Heart right ventricle (tissue), 16 donors: ENCODE measurements at regions of chr18 and their contacts with region 1.

Region 1: GRCh38 chr18:48161191-48161910 is 230.9 kb upstream of the SMAD2 start:
- DNase-seq: peak; percentile 86 to 88
- ATAC-seq: peak; percentile 94 to 97 (median 96)
- H3K4me3 ChIP-seq: peak overlapping the region; percentile 63 to 87 (median 67)
- H3K27ac ChIP-seq: peak overlapping the region; percentile 31 to 95 (median 90)
- H3K4me1 ChIP-seq: peaks cover 6 to 47% (median 27%) of the 10 kb centered on the region in 9 donors
- H3K27me3 ChIP-seq: no peaks in the 10 kb centered on the region
- CTCF ChIP-seq: no peak

Region 2: GRCh38 chr18:48022531-48023329 is 138.6 kb before region 1 on chr18:
- intact Hi-C with region 1: loop called in 1 of 10 experiments (anchors 2 kb)
- DNase-seq: peak in 1 of 2 donors; percentile 41
- ATAC-seq: peak; percentile 47 to 78 (median 72)
- H3K4me3 ChIP-seq: no peak overlapping the region
- H3K27ac ChIP-seq: no peak overlapping the region
- H3K4me1 ChIP-seq: peaks cover 5 to 26% (median 15%) of the 10 kb centered on the region in 9 donors
- H3K27me3 ChIP-seq: peaks cover 0 to 23% (median 6%) of the 10 kb centered on the region in 7 donors
- CTCF ChIP-seq: peak; percentile 28 to 70 (median 63)